Activated B cell treated with CpG ODN at 0.5 μM for 24 hours (primary cell): ENCODE measurements at regions of chr6 and their contacts with region 1.

Region 1: GRCh38 chr6:32355018-32355417 is 16.7 kb downstream of the TSBP1 start:
- DNase-seq: no peak
- ATAC-seq: no peak
- H3K4me3 Mint-ChIP-seq: no peak overlapping the region
- H3K27ac Mint-ChIP-seq: no peak overlapping the region
- H3K4me1 Mint-ChIP-seq: peaks cover 12% of the 10 kb centered on the region
- H3K27me3 Mint-ChIP-seq: no peaks in the 10 kb centered on the region
- CTCF ChIP-seq: no peak

Region 2: GRCh38 chr6:31128093-31128676 is 1226.8 kb before region 1 on chr6:
- CTCF ChIA-PET with region 1: no interaction called
- POLR2A ChIA-PET with region 1: interaction called, 13 read pairs
- intact Hi-C with region 1: no loop called
- DNase-seq: peak; percentile 56
- ATAC-seq: peak; percentile 69
- H3K4me3 Mint-ChIP-seq: no peak overlapping the region
- H3K27ac Mint-ChIP-seq: no peak overlapping the region
- H3K4me1 Mint-ChIP-seq: peaks cover 5% of the 10 kb centered on the region
- H3K27me3 Mint-ChIP-seq: peaks cover 12% of the 10 kb centered on the region
- CTCF ChIP-seq: peak; percentile 54

Region 3: GRCh38 chr6:32393665-32394420 is 38.8 kb after region 1 on chr6:
- CTCF ChIA-PET with region 1: no interaction called
- POLR2A ChIA-PET with region 1: no interaction called
- intact Hi-C with region 1: no loop called
- DNase-seq: no peak
- ATAC-seq: no peak
- H3K4me3 Mint-ChIP-seq: no peak overlapping the region
- H3K27ac Mint-ChIP-seq: no peak overlapping the region
- H3K4me1 Mint-ChIP-seq: peaks cover 16% of the 10 kb centered on the region
- H3K27me3 Mint-ChIP-seq: no peaks in the 10 kb centered on the region
- CTCF ChIP-seq: no peak

Region 4: GRCh38 chr6:32551410-32551809 is 196.4 kb after region 1 on chr6:
- CTCF ChIA-PET with region 1: no interaction called
- POLR2A ChIA-PET with region 1: no interaction called
- intact Hi-C with region 1: no loop called
- DNase-seq: no peak
- ATAC-seq: no peak
- H3K4me3 Mint-ChIP-seq: no peak overlapping the region
- H3K27ac Mint-ChIP-seq: peak overlapping the region; percentile 50
- H3K4me1 Mint-ChIP-seq: peaks cover 18% of the 10 kb centered on the region
- H3K27me3 Mint-ChIP-seq: no peaks in the 10 kb centered on the region
- CTCF ChIP-seq: no peak